ENCODE measurements at regions of chr1 and their contacts with region 1.

Region 1: GRCh38 chr1:12477936-12478611 is 139.9 kb downstream of the DHRS3 start:
- DNase-seq: peak; percentile 94 to 95
- H3K4me3 ChIP-seq: peak overlapping the region; percentile 29; the same call in 1 of the 2 replicates
- H3K27ac ChIP-seq: peak overlapping the region; percentile 96
- H3K4me1 ChIP-seq: peaks cover 82% of the 10 kb centered on the region
- H3K27me3 ChIP-seq: no peaks in the 10 kb centered on the region
- CTCF ChIP-seq: no peak

Region 2: GRCh38 chr1:12314333-12314903 is 163.7 kb before region 1 on chr1:
- CTCF ChIA-PET with region 1: no interaction called
- POLR2A ChIA-PET with region 1: no interaction called
- intact Hi-C with region 1: loop called (anchors 2 kb)
- DNase-seq: no peak
- H3K4me3 ChIP-seq: no peak overlapping the region
- H3K27ac ChIP-seq: no peak overlapping the region
- H3K4me1 ChIP-seq: peaks cover 10% of the 10 kb centered on the region
- H3K27me3 ChIP-seq: no peaks in the 10 kb centered on the region
- CTCF ChIP-seq: peak; percentile 72

Region 3: GRCh38 chr1:12407050-12407961 is 70.8 kb before region 1 on chr1:
- CTCF ChIA-PET with region 1: no interaction called
- POLR2A ChIA-PET with region 1: interaction called, 6 read pairs
- intact Hi-C with region 1: loop called (anchors 5 kb)
- DNase-seq: peak; percentile 12 to 55
- H3K4me3 ChIP-seq: no peak overlapping the region
- H3K27ac ChIP-seq: peak overlapping the region; percentile 61
- H3K4me1 ChIP-seq: peaks cover 23% of the 10 kb centered on the region
- H3K27me3 ChIP-seq: no peaks in the 10 kb centered on the region
- CTCF ChIP-seq: peak; percentile 42; the same call in 1 of the 2 replicates

Region 4: GRCh38 chr1:12454406-12455391 is 23.4 kb before region 1 on chr1:
- CTCF ChIA-PET with region 1: interaction called, 7 read pairs
- POLR2A ChIA-PET with region 1: interaction called, 4 read pairs
- intact Hi-C with region 1: loop called (anchors 1 kb)
- DNase-seq: peak; percentile 52 to 81
- H3K4me3 ChIP-seq: no peak overlapping the region
- H3K27ac ChIP-seq: peak overlapping the region; percentile 55
- H3K4me1 ChIP-seq: peaks cover 42% of the 10 kb centered on the region
- H3K27me3 ChIP-seq: no peaks in the 10 kb centered on the region
- CTCF ChIP-seq: no peak

Region 5: GRCh38 chr1:12549460-12550349 is 71.6 kb after region 1 on chr1:
- CTCF ChIA-PET with region 1: no interaction called
- POLR2A ChIA-PET with region 1: interaction called, 10 read pairs
- intact Hi-C with region 1: loop called (anchors 1 kb)
- DNase-seq: peak; percentile 94
- H3K4me3 ChIP-seq: peak overlapping the region; percentile 17; the same call in 1 of the 2 replicates
- H3K27ac ChIP-seq: peak overlapping the region; percentile 69
- H3K4me1 ChIP-seq: peaks cover 22% of the 10 kb centered on the region
- H3K27me3 ChIP-seq: no peaks in the 10 kb centered on the region
- CTCF ChIP-seq: no peak

Region 6: GRCh38 chr1:12596007-12596821 is 118.1 kb after region 1 on chr1:
- CTCF ChIA-PET with region 1: no interaction called
- POLR2A ChIA-PET with region 1: interaction called, 13 read pairs
- intact Hi-C with region 1: loop called (anchors 1 kb)
- DNase-seq: peak; percentile 90 to 95
- H3K4me3 ChIP-seq: peak overlapping the region; percentile 56; the same call in 1 of the 2 replicates
- H3K27ac ChIP-seq: peak overlapping the region; percentile 100
- H3K4me1 ChIP-seq: peaks cover 68% of the 10 kb centered on the region
- H3K27me3 ChIP-seq: no peaks in the 10 kb centered on the region
- CTCF ChIP-seq: no peak

Region 7: DNA sequence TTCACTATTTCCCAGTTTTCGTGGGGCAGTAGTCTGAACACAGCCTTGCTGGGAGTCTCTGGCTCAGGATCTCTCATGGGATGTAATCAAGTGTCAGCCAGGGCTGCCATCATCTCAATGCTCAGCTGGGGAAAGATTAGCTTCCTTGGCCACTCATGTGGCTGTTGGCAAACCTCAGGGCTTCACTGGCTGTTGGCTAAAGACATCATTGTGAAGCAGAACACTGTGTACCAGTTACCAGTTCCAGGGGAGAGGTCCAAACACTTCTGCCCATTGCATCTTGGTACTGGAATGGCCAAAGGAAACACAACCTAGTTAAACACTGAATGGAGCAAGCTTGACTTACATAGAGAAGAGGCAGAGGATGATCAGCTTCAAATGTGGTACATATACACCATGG is 199.5 kb after region 1 on chr1:
- CTCF ChIA-PET with region 1: no interaction called
- POLR2A ChIA-PET with region 1: no interaction called
- intact Hi-C with region 1: no loop called
- DNase-seq: no peak
- H3K4me3 ChIP-seq: no peak overlapping the region
- H3K27ac ChIP-seq: no peak overlapping the region
- H3K4me1 ChIP-seq: no peaks in the 10 kb centered on the region
- H3K27me3 ChIP-seq: peaks cover 4% of the 10 kb centered on the region; the same call in 1 of the 2 replicates
- CTCF ChIP-seq: no peak

Measured in PC-9 (cell line).